Prostate gland (tissue), 2 donors: ENCODE measurements at regions of chr3 and their contacts with region 1.

Region 1: GRCh38 chr3:4986782-4987537 is 7.7 kb downstream of the BHLHE40 start:
- DNase-seq: peak; percentile 98
- H3K4me3 ChIP-seq: peak overlapping the region; percentile 17 to 27
- H3K27ac ChIP-seq: peak overlapping the region; percentile 98
- H3K4me1 ChIP-seq: peaks cover 32% of the 10 kb centered on the region
- H3K27me3 ChIP-seq: no peaks in the 10 kb centered on the region
- CTCF ChIP-seq: peak in 1 of 4 experiments; percentile 13
- POLR2A ChIP-seq: peak; percentile 28

Region 2: GRCh38 chr3:3509665-3510280 is 1477.2 kb before region 1 on chr3:
- intact Hi-C with region 1: no loop called
- DNase-seq: no peak
- H3K4me3 ChIP-seq: no peak overlapping the region
- H3K27ac ChIP-seq: no peak overlapping the region
- H3K4me1 ChIP-seq: no peaks in the 10 kb centered on the region
- H3K27me3 ChIP-seq: no peaks in the 10 kb centered on the region
- CTCF ChIP-seq: no peak
- POLR2A ChIP-seq: no peak

Region 3: GRCh38 chr3:4656059-4656458 is 330.9 kb before region 1 on chr3:
- intact Hi-C with region 1: loop called (anchors 10 kb)
- DNase-seq: peak; percentile 46
- H3K4me3 ChIP-seq: no peak overlapping the region
- H3K27ac ChIP-seq: peak overlapping the region in 1 of 2 donors; percentile 35
- H3K4me1 ChIP-seq: no peaks in the 10 kb centered on the region
- H3K27me3 ChIP-seq: no peaks in the 10 kb centered on the region
- CTCF ChIP-seq: peak; percentile 48 to 81 (median 73)
- POLR2A ChIP-seq: no peak

Region 4: DNA sequence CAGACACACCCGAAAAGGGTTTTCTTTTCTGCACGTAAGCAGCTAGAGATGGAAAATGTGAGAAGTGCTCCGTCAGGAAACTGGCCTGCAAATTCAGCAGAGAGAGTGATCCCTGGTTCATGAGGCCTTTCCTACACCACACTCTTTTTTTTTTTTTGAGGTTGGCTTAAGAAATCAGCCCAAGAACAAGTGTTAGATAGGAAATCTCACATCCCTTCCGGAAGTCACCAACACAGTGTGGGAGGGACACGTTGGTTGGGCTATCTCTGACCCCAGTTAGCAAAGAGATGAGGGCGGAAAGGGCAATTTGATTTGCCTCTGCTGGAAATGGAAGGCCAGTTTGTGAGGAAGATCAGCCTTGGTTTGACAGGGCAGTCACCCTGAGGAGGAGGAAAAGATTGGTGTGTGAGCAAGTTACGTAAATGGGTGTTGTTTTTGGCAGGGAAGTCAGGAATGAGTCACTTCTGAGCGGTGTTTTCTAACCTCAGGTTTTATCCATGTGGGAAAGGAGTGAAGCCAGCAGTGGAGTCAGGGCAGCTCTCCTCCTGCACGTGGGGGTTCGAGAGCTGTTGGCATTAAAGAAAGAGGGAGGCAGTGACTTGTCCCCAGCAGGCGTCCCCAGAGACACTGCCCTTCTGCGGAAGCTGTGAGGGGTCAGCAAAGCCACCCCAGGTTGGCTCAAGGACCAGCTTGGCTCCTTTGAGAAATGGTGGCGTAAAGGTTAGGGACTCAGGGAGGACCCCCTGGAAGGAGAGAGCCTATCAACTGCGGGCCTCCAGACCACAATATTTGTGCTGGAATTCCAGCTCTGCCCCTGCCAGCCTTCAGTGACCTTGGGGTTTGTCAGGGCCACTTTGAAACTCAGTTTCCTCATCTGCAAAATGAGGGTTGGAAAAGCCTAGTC is 245.3 kb before region 1 on chr3:
- intact Hi-C with region 1: loop called (anchors 10 kb)
- DNase-seq: peak; percentile 88
- H3K4me3 ChIP-seq: no peak overlapping the region
- H3K27ac ChIP-seq: peak overlapping the region; percentile 80
- H3K4me1 ChIP-seq: peaks cover 11% of the 10 kb centered on the region
- H3K27me3 ChIP-seq: no peaks in the 10 kb centered on the region
- CTCF ChIP-seq: no peak
- POLR2A ChIP-seq: peak; percentile 67

Region 5: DNA sequence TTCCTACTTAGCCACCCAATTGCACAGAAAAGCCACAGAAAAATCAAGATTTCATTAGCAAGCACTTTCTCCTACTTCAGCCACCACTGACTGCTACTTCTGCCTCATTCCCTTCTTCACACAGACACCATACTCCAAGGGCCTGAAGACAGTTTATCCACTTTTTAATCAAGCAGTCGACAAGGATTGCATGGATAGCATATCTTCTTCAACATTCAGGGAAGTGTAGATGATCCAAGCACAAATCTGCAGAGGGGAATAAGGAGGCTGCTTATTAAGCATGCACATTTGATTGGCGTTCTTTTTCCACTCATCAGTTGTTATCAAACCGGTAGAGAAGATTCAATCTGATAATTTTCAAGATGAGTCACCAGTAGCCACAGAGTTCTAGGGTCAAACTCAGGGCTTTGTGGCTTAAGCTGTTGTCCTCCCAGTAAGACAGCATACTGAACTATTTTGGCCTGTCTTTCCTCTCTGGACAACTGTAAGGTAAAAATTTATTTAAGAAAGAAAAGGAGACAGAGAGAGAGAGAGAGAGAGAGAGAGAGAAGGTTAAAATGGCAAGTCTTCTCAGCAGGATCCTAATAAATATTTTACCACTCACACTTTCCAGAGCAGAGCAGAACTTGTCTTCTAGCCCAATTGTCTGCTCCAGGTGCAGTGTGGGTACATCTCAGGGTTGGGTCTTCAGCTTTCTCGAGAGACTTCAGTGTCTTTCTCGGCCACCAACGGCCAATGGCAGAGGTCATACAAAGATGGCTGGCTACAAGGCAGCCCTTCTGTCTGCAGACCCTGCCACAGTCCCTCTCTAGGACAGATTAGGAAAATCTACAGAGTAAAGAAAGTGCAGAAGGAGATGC is 88.3 kb before region 1 on chr3:
- intact Hi-C with region 1: loop called (anchors 5 kb)
- DNase-seq: no peak
- H3K4me3 ChIP-seq: no peak overlapping the region
- H3K27ac ChIP-seq: peak overlapping the region; percentile 45 to 48
- H3K4me1 ChIP-seq: no peaks in the 10 kb centered on the region
- H3K27me3 ChIP-seq: no peaks in the 10 kb centered on the region
- CTCF ChIP-seq: no peak
- POLR2A ChIP-seq: no peak

Region 6: GRCh38 chr3:5026331-5027218 is 39.6 kb after region 1 on chr3:
- intact Hi-C with region 1: loop called (anchors 5 kb)
- DNase-seq: peak; percentile 79
- H3K4me3 ChIP-seq: peak overlapping the region; percentile 34 to 36
- H3K27ac ChIP-seq: peak overlapping the region; percentile 71 to 77
- H3K4me1 ChIP-seq: no peaks in the 10 kb centered on the region
- H3K27me3 ChIP-seq: no peaks in the 10 kb centered on the region
- CTCF ChIP-seq: peak; percentile 51 to 83 (median 82)
- POLR2A ChIP-seq: no peak

Region 7: GRCh38 chr3:5071061-5071460 is 84.1 kb after region 1 on chr3:
- intact Hi-C with region 1: no loop called
- DNase-seq: no peak
- H3K4me3 ChIP-seq: no peak overlapping the region
- H3K27ac ChIP-seq: no peak overlapping the region
- H3K4me1 ChIP-seq: no peaks in the 10 kb centered on the region
- H3K27me3 ChIP-seq: no peaks in the 10 kb centered on the region
- CTCF ChIP-seq: no peak
- POLR2A ChIP-seq: no peak

Region 8: GRCh38 chr3:5110337-5110736 is 123.4 kb after region 1 on chr3:
- intact Hi-C with region 1: no loop called
- DNase-seq: no peak
- H3K4me3 ChIP-seq: no peak overlapping the region
- H3K27ac ChIP-seq: no peak overlapping the region
- H3K4me1 ChIP-seq: no peaks in the 10 kb centered on the region
- H3K27me3 ChIP-seq: no peaks in the 10 kb centered on the region
- CTCF ChIP-seq: no peak
- POLR2A ChIP-seq: no peak